BJ (cell line): ENCODE measurements at regions of chr16 and their contacts with region 1.

Region 1: DNA sequence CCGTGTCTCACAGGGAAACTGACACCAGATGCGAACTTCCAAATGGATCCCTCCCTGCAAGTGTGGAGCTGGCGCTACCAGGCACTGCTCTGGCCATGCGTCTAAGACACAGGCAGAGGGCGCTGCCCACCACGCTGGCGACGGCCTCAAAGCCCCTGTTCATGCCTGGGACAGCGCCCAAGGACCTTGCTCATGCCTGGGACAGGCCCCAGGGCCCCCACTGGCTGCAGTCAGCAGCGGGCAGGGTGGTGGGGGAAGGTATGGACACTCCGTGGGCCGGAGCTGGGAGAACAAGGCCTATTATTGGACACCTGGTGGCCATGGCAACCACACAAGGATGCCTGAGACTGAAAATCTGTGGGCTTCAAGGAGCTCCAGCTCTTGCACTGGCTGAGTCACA is 8.8 kb downstream of the ZG16B start:
- DNase-seq: no peak
- H3K4me3 ChIP-seq: no peak overlapping the region
- H3K27me3 ChIP-seq: peaks cover 4% of the 10 kb centered on the region
- CTCF ChIP-seq: peak; percentile 97

Region 2: DNA sequence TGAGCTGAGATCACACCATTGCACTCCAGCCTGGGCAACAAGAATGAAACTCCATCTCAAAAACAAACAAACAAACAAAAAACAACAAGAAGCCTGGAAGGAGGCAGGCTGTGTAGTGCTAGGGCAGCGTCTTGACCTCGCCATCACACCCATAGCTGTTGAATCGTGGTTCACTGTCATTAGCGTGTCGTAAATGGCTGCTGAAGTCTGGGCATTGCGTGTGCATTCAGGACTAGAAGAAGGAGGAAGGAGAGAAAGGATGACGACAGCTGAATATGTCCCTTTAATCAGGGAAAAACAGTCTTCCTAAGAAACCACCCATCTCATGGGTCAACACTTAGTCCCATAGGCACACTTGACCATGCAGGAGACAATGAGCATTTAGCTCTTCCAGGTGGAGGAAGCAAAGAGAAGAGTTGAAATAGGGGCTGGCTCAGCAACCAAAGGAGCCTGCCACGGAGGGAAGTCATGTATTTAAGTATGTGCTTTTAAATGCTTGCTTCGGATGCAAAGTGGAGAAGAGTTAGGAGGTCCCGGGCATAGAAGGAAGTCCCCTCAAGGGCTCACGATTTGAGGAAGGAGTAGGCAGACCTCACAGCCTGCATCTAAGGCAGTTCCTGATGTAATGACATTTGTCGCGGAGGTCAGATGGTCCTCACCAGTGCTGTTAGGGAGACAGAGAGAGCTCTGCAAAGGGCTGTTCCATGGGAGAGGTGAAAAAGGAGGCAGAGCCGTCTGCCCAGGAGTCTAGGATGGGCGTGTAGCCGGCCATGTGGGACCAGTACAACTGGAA is 10.2 kb after region 1 on chr16:
- CTCF ChIA-PET with region 1: interaction called, 25 read pairs
- POLR2A ChIA-PET with region 1: no interaction called
- DNase-seq: no peak
- H3K4me3 ChIP-seq: no peak overlapping the region
- H3K27me3 ChIP-seq: peaks cover 20% of the 10 kb centered on the region
- CTCF ChIP-seq: no peak

Region 3: DNA sequence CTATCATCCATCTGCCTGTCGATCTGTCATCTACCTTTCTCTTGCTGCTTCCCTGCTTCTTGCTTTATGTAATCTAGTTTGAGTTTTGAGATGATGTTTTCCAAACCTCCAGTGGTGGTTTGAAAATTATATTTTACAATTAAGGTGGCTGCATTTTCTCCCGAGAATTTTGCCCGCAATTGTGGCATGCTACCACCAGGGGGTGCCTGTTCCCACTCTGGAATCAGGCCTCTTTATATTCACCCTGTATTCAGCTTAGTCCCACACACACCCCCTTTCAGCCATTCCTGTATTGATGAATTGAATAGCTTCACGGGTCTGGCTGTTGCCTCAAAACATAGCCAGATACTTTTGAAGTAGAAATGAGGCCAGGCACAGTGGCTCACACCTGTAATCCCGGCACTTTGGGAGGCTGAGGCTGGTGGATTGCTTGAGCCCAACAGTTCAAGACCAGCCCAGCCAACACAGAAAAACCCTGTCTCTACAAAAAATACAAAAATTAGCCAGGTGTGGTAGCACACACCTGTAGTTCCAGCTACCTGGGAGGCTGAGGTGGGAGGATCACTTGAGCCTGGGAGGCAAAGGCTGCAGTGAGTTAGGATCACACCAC is 15.9 kb after region 1 on chr16:
- CTCF ChIA-PET with region 1: interaction called, 25 read pairs
- POLR2A ChIA-PET with region 1: no interaction called
- DNase-seq: no peak
- H3K4me3 ChIP-seq: no peak overlapping the region
- H3K27me3 ChIP-seq: peaks cover 13% of the 10 kb centered on the region
- CTCF ChIP-seq: peak; percentile 49

Region 4: GRCh38 chr16:2867987-2868789 is 29.3 kb after region 1 on chr16:
- CTCF ChIA-PET with region 1: interaction called, 201 read pairs
- POLR2A ChIA-PET with region 1: no interaction called
- DNase-seq: peak; percentile 64
- H3K4me3 ChIP-seq: peak overlapping the region; percentile 63
- H3K27me3 ChIP-seq: no peaks in the 10 kb centered on the region
- CTCF ChIP-seq: peak; percentile 98

Region 5: DNA sequence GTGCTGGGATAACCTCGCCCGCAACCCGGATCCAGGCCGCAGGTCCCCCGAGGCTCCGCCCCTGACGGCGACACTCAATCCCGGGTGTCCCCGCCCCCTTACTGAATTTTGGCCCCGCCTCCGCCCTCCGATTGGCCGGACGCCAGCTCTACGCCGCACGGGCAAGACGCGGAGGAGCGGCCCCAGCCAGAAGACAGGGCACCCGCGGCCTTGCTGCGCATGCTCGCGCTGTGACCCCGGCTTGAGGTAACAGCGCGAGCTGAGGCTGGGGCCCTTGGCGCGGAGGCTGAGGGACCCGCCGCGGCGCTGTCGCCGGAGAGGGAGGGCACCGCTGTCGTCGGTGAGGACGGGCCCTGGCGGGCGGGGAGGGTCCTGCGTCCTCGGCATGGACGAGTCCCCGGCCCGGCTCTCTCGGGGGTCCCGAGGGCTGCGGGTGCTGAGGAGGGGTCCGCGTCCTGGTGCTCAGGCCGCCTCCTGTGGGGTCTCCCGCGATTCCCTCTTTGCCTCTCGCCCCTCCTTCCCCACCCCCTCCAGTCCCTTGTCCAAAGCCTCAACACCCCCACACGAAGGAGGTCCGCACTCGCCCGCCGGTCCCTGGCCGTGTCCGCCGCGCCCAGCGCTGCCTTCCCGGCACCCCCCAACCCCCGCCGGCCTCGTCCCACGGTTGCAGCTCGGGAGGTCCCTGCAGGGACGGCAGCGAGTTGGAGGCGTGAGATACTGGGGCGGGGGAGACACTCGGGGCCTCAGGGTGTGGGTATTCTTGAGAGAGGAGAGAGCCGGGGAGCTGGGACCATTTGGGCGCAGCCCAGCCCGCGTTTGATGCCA is 44.3 kb after region 1 on chr16 and contains the start of gene FLYWCH2:
- CTCF ChIA-PET with region 1: interaction called, 10 read pairs
- POLR2A ChIA-PET with region 1: no interaction called
- DNase-seq: peak; percentile 76
- H3K4me3 ChIP-seq: peak within 1 kb of the TSS; percentile 99
- H3K27me3 ChIP-seq: no peaks in the 10 kb centered on the region; the same call in 1 of the 2 replicates
- CTCF ChIP-seq: no peak
- polyA plus RNA-seq, gene FLYWCH2: 25.6 and 39.9 TPM in 2 replicates

Region 6: GRCh38 chr16:2905431-2906387 is 66.8 kb after region 1 on chr16:
- CTCF ChIA-PET with region 1: interaction called, 11 read pairs
- POLR2A ChIA-PET with region 1: no interaction called
- DNase-seq: peak; percentile 92
- H3K4me3 ChIP-seq: peak overlapping the region; percentile 73
- H3K27me3 ChIP-seq: no peaks in the 10 kb centered on the region
- CTCF ChIP-seq: no peak

Region 7: GRCh38 chr16:2919511-2920255 is 80.8 kb after region 1 on chr16:
- CTCF ChIA-PET with region 1: interaction called, 35 read pairs
- POLR2A ChIA-PET with region 1: no interaction called
- DNase-seq: no peak
- H3K4me3 ChIP-seq: no peak overlapping the region
- H3K27me3 ChIP-seq: no peaks in the 10 kb centered on the region
- CTCF ChIP-seq: peak; percentile 82